Mammary epithelial cell (primary cell): ENCODE measurements at regions of chr11 and their contacts with region 1.

Region 1: GRCh38 chr11:72652873-72653630 is 21.2 kb downstream of the PDE2A start:
- DNase-seq: no peak
- H3K4me3 ChIP-seq: no peak overlapping the region
- H3K27ac ChIP-seq: no peak overlapping the region
- H3K4me1 ChIP-seq: no peaks in the 10 kb centered on the region
- H3K27me3 ChIP-seq: no peaks in the 10 kb centered on the region
- CTCF ChIP-seq: no peak

Region 2: DNA sequence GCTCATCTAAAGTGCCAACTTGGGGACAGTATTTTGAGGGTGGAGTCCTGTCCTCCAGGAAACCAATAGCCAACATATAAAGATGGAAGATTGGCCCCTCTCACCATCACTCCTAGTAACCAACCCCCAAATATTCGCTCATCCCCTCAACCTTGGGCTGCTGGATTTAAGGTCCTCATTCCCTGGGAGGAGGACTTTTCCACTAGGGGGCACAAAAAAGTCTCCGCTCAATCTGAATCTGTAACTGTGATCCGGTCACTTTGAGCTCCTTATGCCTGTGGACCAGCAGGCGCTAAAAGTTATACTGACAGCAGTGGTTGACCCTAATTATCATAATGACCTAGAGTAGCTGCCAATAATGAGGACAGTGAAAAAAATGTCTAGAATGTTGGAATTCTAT is 198.3 kb before region 1 on chr11:
- CTCF ChIA-PET with region 1: no interaction called
- dilution Hi-C with region 1: loop called (anchors 10 kb)
- in situ Hi-C with region 1: no loop called
- intact Hi-C with region 1: no loop called
- DNase-seq: no peak
- H3K4me3 ChIP-seq: no peak overlapping the region
- H3K27ac ChIP-seq: no peak overlapping the region
- H3K4me1 ChIP-seq: no peaks in the 10 kb centered on the region
- H3K27me3 ChIP-seq: peaks cover 1% of the 10 kb centered on the region
- CTCF ChIP-seq: no peak

Region 3: DNA sequence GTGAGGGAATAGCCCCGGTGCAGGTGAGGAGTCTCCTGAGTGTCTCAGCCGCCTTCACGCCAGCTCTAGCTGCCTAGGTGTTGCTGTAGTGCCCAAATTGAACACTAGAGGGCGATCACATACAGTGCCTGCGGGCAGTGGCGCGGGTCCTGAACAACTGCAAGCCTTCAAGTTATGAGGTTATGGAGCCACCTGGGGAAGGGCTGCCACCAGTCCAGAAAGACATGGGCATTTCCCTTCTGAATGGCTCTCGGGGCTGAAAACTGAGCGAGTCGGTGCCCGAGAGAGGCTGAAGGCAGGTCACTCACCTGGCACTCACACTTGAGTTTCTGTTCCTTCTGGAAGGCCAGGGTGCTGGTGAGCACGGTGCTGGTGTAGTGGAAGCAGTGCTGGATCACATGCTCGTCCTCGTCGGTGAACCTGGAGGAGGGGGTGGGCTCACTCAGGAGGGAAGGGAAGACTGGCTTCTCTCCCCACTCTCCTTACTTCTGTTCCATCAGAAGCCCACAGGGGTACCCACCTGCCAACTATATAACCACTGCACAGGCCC is 67.2 kb before region 1 on chr11:
- CTCF ChIA-PET with region 1: no interaction called
- dilution Hi-C with region 1: loop called (anchors 5 kb)
- in situ Hi-C with region 1: no loop called
- intact Hi-C with region 1: no loop called
- DNase-seq: peak; percentile 53
- H3K4me3 ChIP-seq: no peak overlapping the region
- H3K27ac ChIP-seq: no peak overlapping the region
- H3K4me1 ChIP-seq: peaks cover 8% of the 10 kb centered on the region
- H3K27me3 ChIP-seq: peaks cover 10% of the 10 kb centered on the region
- CTCF ChIP-seq: peak; percentile 80 to 83

Region 4: DNA sequence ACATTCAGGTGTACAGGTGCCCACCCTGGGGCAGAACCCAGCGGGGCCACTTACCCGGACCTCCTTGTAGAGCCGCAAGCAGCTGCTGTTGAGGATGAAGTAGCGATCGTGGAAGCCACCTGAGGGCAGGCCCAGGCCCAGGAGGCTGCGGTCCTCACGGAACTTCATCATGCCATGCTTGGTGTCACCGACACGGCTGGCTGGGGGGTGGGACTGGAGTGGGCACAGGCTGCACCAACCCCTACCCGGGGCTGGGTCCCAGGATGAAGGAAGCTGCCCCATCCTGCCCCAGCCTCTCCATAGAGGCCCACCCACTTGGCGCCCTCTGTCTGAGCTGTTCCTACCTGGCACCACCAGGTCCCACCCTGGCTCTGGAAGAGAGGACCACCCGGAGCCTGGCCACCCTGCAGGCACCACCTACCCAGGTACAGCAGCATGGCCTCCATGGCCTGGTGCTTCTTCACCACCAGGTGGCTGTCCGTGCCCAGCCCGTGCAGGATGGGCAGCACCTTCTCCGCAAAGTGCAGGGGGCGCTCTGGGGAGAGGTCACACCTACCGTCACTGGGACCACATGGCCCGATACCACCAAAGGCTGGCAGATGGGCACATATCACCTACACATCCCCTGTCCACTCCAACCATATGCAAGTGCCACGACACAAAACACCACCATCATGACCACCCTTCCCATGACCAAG is 40.4 kb after region 1 on chr11:
- CTCF ChIA-PET with region 1: no interaction called
- dilution Hi-C with region 1: loop called (anchors 5 kb)
- in situ Hi-C with region 1: no loop called
- intact Hi-C with region 1: no loop called
- DNase-seq: no peak
- H3K4me3 ChIP-seq: no peak overlapping the region
- H3K27ac ChIP-seq: no peak overlapping the region
- H3K4me1 ChIP-seq: no peaks in the 10 kb centered on the region
- H3K27me3 ChIP-seq: no peaks in the 10 kb centered on the region
- CTCF ChIP-seq: no peak